SK-N-SH (cell line): ENCODE measurements at regions of chr2 and their contacts with region 1.

Region 1: GRCh38 chr2:20661067-20661980 is 5.6 kb upstream of the GDF7 start:
- DNase-seq: peak; percentile 88
- H3K4me3 ChIP-seq: peak overlapping the region in 1 of 2 experiments; percentile 5; a peak in 1 of 4 replicates
- H3K27ac ChIP-seq: no peak overlapping the region
- H3K4me1 ChIP-seq: peaks cover 0 to 10% of the 10 kb centered on the region in 2 experiments; a peak in 2 of 4 replicates
- H3K27me3 ChIP-seq: peaks cover 71% of the 10 kb centered on the region
- CTCF ChIP-seq: peak; percentile 99
- EP300 ChIP-seq: 0 out of 4 replicates have a peak, but pooled peaks of 1 of the 2 experiments have one; percentile 23
- RAD21 ChIP-seq: peak; percentile 99

Region 2: DNA sequence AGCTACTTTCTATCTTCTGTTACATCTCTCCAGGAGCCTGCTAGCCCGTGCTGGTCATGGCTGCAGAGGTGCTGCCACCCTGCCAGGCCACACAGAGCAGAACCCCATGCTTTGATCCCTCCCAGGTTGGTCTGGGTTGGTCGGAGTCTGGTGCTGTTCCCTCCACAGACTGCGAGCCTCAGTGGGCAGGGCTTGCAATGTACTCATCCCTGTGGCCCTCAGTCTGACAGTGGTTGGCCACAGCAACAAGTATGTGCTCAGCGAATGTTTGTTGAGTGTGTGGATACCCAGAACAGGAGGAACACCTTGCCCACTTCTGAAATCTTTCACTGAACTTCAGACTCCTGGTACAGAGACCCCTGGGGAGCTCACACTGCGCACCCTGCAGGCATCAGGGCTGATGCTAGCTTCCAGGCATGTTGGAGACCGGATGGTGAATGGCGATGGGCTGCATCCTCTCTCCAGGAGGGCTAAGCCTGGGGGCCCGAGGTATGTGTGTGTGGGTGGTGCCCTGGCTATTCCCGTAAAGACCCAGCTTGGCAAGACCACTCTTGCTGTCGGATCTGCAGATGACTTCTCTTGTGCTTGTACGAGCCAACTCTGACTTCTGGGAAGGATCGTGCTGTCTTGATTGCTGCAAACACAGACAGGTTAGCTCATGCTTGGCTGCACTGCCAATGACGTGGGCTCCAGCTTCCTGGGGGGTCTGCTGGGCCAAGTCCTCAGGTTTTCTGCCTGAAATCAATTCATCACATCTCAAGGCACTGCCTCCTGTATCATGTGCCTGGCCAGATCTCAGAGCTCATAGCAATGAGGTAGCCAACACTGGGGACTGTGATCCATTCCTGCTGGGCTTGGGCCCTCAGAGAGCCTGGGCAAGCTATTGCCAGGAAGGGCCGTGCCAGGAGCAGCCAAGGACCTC is 170.8 kb before region 1 on chr2:
- CTCF ChIA-PET with region 1: no interaction called
- POLR2A ChIA-PET with region 1: no interaction called
- DNase-seq: no peak
- H3K4me3 ChIP-seq: no peak overlapping the region
- H3K27ac ChIP-seq: no peak overlapping the region
- H3K4me1 ChIP-seq: peaks cover 10 to 55% of the 10 kb centered on the region in 2 experiments
- H3K27me3 ChIP-seq: no peaks in the 10 kb centered on the region
- CTCF ChIP-seq: no peak
- EP300 ChIP-seq: no peak
- RAD21 ChIP-seq: no peak

Region 3: GRCh38 chr2:20642055-20642971 is 19.0 kb before region 1 on chr2:
- CTCF ChIA-PET with region 1: interaction called, 103 read pairs
- POLR2A ChIA-PET with region 1: no interaction called
- DNase-seq: peak; percentile 99
- H3K4me3 ChIP-seq: no peak overlapping the region; a peak in 1 of 4 replicates
- H3K27ac ChIP-seq: no peak overlapping the region
- H3K4me1 ChIP-seq: peaks cover 13 to 18% of the 10 kb centered on the region in 2 experiments; a peak in 3 of 4 replicates
- H3K27me3 ChIP-seq: no peaks in the 10 kb centered on the region
- CTCF ChIP-seq: peak; percentile 98
- EP300 ChIP-seq: no peak
- RAD21 ChIP-seq: peak; percentile 96

Region 4: DNA sequence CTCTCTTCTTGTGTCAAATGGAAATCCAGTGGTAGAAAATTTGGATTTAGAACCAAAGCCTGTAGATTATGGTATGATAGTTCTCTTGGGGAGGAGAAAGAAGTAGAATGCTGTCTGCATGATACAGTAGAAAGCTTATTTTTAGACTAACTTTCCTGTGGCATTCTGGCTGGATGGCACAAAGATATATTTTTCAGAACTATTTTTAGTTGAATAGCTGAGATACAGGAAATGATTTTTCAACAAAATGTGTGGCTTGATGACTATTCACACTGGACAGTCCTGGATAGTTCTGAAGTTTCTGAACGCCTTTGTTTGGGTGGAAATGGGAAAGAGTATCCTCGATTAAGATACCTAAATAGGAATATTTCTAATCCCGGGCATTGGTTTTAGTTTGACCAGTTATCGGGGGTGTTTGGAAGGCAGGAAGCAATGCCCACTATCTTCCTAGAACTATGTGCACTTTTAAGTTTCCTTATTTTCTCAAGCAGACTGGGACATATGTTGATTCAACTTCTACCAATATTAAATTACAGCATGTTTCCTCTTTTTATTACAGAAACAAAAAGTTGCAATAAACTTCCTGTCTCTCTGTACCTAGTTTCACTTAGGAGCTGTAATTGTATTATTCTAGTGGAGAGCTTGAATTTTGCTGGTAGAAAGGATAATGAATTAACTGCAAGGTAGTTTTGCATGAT is 37.7 kb after region 1 on chr2:
- CTCF ChIA-PET with region 1: interaction called, 22 read pairs
- POLR2A ChIA-PET with region 1: no interaction called
- DNase-seq: no peak
- H3K4me3 ChIP-seq: no peak overlapping the region
- H3K27ac ChIP-seq: peak overlapping the region; percentile 55 to 60; a peak in 3 of 4 replicates
- H3K4me1 ChIP-seq: peaks cover 0 to 14% of the 10 kb centered on the region in 2 experiments; a peak in 3 of 4 replicates
- H3K27me3 ChIP-seq: no peaks in the 10 kb centered on the region
- CTCF ChIP-seq: no peak
- EP300 ChIP-seq: no peak
- RAD21 ChIP-seq: no peak

Region 5: DNA sequence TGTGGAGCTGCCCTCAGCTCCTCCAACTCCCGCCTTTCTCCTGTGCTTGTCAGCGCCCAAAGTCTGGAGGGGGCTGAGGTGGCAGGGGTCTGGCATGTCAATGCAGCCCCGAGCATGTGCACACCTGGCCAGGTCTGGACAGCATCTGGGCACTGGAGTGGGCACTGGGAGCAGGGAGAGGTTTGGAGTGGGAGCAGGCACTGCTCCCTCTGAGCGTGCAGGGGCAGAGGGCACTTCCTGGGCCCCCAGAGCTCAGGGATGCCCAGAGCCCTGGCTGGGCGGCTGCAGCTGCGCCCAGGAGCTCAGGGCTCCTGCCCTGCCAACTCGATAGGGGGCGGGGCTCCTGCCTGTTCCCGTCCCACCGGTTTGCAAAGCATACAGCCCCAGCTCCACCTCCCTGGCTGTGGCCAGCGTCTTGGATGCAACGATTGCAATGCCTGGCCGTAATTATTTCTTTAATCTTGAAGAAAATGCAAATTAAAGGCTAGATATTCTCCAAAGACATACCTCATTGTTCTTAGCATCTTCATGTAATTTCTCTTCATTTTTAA is 219.0 kb after region 1 on chr2:
- CTCF ChIA-PET with region 1: interaction called, 12 read pairs
- POLR2A ChIA-PET with region 1: no interaction called
- DNase-seq: no peak
- H3K4me3 ChIP-seq: no peak overlapping the region
- H3K27ac ChIP-seq: no peak overlapping the region
- H3K4me1 ChIP-seq: peaks cover 0 to 20% of the 10 kb centered on the region in 2 experiments; a peak in 2 of 4 replicates
- H3K27me3 ChIP-seq: no peaks in the 10 kb centered on the region
- CTCF ChIP-seq: no peak
- EP300 ChIP-seq: no peak
- RAD21 ChIP-seq: no peak

Region 6: GRCh38 chr2:20953145-20953824 is 292.0 kb after region 1 on chr2:
- CTCF ChIA-PET with region 1: interaction called, 427 read pairs
- POLR2A ChIA-PET with region 1: no interaction called
- DNase-seq: no peak
- H3K4me3 ChIP-seq: no peak overlapping the region
- H3K27ac ChIP-seq: no peak overlapping the region
- H3K4me1 ChIP-seq: peaks cover 0 to 3% of the 10 kb centered on the region in 2 experiments; a peak in 1 of 4 replicates
- H3K27me3 ChIP-seq: no peaks in the 10 kb centered on the region
- CTCF ChIP-seq: no peak
- EP300 ChIP-seq: no peak
- RAD21 ChIP-seq: no peak

Region 7: GRCh38 chr2:20999906-21000645 is 338.8 kb after region 1 on chr2:
- CTCF ChIA-PET with region 1: interaction called, 10 read pairs
- POLR2A ChIA-PET with region 1: no interaction called
- DNase-seq: peak; percentile 48
- H3K4me3 ChIP-seq: no peak overlapping the region
- H3K27ac ChIP-seq: no peak overlapping the region
- H3K4me1 ChIP-seq: peaks cover 0 to 3% of the 10 kb centered on the region in 2 experiments; a peak in 2 of 4 replicates
- H3K27me3 ChIP-seq: no peaks in the 10 kb centered on the region
- CTCF ChIP-seq: no peak
- EP300 ChIP-seq: no peak
- RAD21 ChIP-seq: no peak

Region 8: GRCh38 chr2:21165350-21165749 is 504.0 kb after region 1 on chr2:
- CTCF ChIA-PET with region 1: interaction called, 11 read pairs
- POLR2A ChIA-PET with region 1: no interaction called
- DNase-seq: peak; percentile 34
- H3K4me3 ChIP-seq: no peak overlapping the region
- H3K27ac ChIP-seq: no peak overlapping the region
- H3K4me1 ChIP-seq: no peaks in the 10 kb centered on the region; a peak in 1 of 4 replicates
- H3K27me3 ChIP-seq: no peaks in the 10 kb centered on the region
- CTCF ChIP-seq: peak; percentile 44
- EP300 ChIP-seq: no peak
- RAD21 ChIP-seq: peak; percentile 67